BJ (cell line): ENCODE measurements at regions of chr1 and their contacts with region 1.

Region 1: DNA sequence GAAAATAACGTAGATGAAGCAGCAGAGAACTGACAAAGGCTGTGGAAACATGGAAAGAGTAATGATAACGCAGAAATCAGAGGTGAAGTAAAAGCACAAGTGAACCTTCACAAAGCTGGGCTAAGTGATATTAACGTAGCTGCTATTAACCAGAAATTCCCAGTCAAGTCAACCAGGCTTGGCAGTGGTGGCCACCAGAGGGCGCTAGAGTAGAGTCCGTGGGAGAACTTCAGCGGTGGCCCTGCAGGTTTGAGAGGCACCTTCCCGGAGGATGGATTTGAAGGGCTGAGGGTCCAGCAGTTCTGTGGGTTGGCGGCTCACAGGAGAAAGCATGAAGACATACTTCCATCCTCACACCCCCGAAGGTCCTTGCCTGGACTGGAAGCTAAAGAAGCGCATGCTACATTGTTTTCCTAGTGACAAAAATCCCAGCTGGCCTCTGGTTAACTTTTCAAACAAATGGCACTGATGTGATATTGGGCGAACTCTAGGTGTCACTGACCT is 81.7 kb upstream of the ZNF648 start:
- DNase-seq: no peak
- H3K4me3 ChIP-seq: no peak overlapping the region
- H3K27me3 ChIP-seq: no peaks in the 10 kb centered on the region; the same call in 1 of the 2 replicates
- CTCF ChIP-seq: peak; percentile 96

Region 2: GRCh38 chr1:182084487-182085316 is 58.5 kb before region 1 on chr1:
- CTCF ChIA-PET with region 1: interaction called, 16 read pairs
- POLR2A ChIA-PET with region 1: no interaction called
- DNase-seq: no peak
- H3K4me3 ChIP-seq: no peak overlapping the region
- H3K27me3 ChIP-seq: no peaks in the 10 kb centered on the region
- CTCF ChIP-seq: peak; percentile 79

Region 3: GRCh38 chr1:182129398-182129797 is 13.8 kb before region 1 on chr1:
- CTCF ChIA-PET with region 1: interaction called, 24 read pairs
- POLR2A ChIA-PET with region 1: no interaction called
- DNase-seq: no peak
- H3K4me3 ChIP-seq: no peak overlapping the region
- H3K27me3 ChIP-seq: no peaks in the 10 kb centered on the region
- CTCF ChIP-seq: no peak

Region 4: DNA sequence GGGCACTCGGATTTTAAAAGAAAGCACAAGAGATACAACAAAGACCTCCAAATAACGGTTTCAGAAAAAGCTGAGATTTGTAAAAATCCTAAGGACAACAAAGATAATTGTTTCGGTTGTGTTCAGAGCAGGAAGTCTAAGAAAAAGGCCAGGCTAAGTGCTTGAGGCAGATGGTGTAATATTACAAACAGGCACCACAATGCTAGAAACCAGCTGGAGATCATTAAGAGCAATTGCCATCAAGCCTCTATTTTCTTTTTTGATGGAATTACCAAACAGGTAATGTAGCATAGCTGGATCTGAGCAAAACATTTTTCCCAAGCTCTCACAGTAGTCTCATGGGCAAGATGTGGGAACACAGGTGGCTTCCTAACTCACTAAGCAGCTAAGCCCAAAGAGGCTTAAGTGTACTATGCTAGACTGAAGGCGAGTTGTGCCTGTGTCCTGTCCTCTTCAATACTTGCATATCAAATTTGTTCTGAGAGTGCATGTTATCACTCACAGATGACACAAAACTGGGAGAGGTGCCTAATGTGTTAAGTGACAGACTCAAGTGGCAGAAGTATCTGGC is 86.8 kb after region 1 on chr1:
- CTCF ChIA-PET with region 1: interaction called, 12 read pairs
- POLR2A ChIA-PET with region 1: no interaction called
- DNase-seq: no peak
- H3K4me3 ChIP-seq: no peak overlapping the region
- H3K27me3 ChIP-seq: no peaks in the 10 kb centered on the region
- CTCF ChIP-seq: no peak

Region 5: DNA sequence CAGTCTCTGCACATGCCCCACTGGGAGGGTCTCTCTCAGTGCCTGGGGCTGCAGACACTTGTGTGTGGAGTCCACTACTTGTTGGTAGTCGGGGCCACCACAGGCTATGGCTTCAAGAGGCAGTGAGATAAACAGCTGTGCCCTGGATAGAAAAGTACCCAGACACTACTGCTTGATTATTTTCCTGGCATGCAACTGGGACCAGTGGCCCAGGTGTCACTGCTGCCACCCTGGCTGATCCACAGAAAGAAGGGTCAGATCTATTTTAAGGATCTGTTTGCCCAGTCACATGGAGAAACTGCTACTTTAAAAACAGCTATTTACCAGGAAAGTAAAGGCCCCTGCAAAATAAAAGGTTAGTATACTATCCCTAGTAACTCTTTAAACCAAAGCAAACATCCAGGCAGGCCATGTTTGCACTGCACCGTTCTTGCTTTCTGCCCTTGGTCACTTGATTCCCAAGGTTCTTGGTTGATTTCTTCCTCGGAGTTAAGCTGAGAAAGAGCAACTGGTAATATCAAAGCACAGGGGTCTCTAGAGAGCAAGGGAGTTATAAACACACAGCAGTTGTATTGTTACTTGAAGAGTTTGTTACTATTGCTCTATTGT is 148.5 kb after region 1 on chr1:
- CTCF ChIA-PET with region 1: interaction called, 16 read pairs
- POLR2A ChIA-PET with region 1: no interaction called
- DNase-seq: no peak
- H3K4me3 ChIP-seq: no peak overlapping the region
- H3K27me3 ChIP-seq: no peaks in the 10 kb centered on the region
- CTCF ChIP-seq: no peak

Region 6: GRCh38 chr1:182348961-182349747 is 205.9 kb after region 1 on chr1:
- CTCF ChIA-PET with region 1: interaction called, 10 read pairs
- POLR2A ChIA-PET with region 1: no interaction called
- DNase-seq: no peak
- H3K4me3 ChIP-seq: no peak overlapping the region
- H3K27me3 ChIP-seq: no peaks in the 10 kb centered on the region
- CTCF ChIP-seq: no peak

Region 7: GRCh38 chr1:182391362-182392044 is 248.3 kb after region 1 on chr1 and contains the start of gene GLUL:
- CTCF ChIA-PET with region 1: interaction called, 291 read pairs
- POLR2A ChIA-PET with region 1: interaction called, 9 read pairs
- DNase-seq: peak; percentile 63
- H3K4me3 ChIP-seq: peak within 1 kb of the TSS; percentile 84
- H3K27me3 ChIP-seq: no peaks in the 10 kb centered on the region
- CTCF ChIP-seq: 0 out of 2 replicates have a peak, but pooled peaks have one; percentile 29
- polyA plus RNA-seq, gene GLUL: 325 and 494 TPM in 2 replicates